HCT116 (cell line): ENCODE measurements at regions of chr6 and their contacts with region 1.

Region 1: DNA sequence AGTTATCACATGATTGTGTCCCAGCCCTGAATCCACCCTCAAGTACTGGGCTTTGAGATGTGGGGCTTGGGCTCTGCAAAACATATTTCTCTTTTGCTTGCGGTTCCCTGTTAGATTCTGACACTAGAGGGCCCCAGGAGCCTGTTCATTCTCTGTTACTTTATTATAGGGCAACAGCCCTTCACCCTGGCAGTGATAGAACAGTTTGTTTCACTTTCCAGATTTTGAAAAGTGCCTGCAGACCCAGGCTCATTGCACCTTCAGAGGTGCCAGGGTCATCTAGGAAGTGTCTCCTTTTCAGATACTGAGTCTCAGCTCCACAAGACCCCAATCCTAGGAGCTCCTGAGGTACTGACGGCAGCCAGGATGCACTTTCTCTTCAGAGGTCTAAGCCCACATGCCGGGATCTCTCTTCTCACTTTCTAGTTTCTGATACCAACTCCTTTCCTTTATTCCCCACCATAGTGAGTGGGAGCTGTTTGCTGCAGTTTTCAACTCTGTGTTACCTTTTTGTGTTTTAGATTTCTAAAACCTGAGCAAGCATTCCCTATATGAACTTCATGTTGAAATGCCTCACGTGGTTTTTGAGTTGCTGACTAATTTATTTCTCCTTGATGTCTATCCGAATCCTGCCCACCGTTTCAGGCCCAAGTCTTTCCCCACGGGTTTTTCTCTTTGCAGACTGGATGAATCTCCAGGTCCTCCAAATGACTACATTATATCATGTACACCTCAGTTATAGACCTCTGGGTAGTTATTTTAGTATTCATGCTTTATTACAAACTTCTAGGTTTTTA is 10.9 kb downstream of the ABT1 start:
- DNase-seq: peak; percentile 48
- ATAC-seq: peak; percentile 97
- H3K4me3 ChIP-seq: peak overlapping the region in 1 of 2 experiments; percentile 15; a peak in 1 of 4 replicates
- H3K27ac ChIP-seq: no peak overlapping the region
- H3K4me1 ChIP-seq: no peaks in the 10 kb centered on the region; a peak in 1 of 4 replicates
- H3K27me3 ChIP-seq: no peaks in the 10 kb centered on the region
- CTCF ChIP-seq: peak; percentile 79 to 80 (median 80)
- POLR2A ChIP-seq: no peak
- RAD21 ChIP-seq: peak; percentile 95

Region 2: DNA sequence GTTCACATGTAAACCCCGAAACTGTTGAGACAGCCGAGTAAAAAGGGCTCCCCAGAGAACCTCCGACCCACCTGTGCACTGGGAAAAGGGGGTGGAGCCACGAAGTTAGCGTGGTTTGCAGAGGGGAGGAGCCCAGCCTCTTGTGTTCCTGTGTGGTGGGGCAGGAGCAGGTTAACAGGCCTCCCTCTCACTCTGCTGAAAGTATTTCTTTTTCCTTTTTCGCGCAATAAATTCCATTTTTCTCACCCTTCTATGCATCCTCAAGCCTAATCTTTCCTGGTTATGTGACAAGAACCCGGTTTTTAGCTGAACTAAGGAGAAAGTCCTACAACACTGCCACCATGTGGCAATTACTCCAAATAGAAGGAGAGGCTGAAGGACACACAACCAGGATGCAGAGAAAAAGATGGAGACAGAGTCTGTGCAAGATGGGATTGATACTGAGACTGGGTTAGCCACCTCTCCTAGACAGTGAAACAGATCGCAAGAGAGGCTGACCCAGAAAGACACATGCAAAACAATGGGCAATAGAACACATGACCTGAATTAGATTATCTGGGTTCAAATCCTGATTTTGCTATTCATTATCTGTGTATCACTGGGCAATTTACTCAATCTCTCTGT is 471.2 kb after region 1 on chr6:
- CTCF ChIA-PET with region 1: no interaction called
- POLR2A ChIA-PET with region 1: no interaction called
- RAD21 ChIA-PET with region 1: no interaction called
- intact Hi-C with region 1: loop called (anchors 1 kb)
- DNase-seq: peak; percentile 52
- ATAC-seq: peak; percentile 99
- H3K4me3 ChIP-seq: peak overlapping the region; percentile 34 to 47
- H3K27ac ChIP-seq: no peak overlapping the region
- H3K4me1 ChIP-seq: peaks cover 0 to 10% of the 10 kb centered on the region in 2 experiments; a peak in 2 of 4 replicates
- H3K27me3 ChIP-seq: no peaks in the 10 kb centered on the region
- CTCF ChIP-seq: peak; percentile 72 to 90 (median 80)
- POLR2A ChIP-seq: no peak
- RAD21 ChIP-seq: peak; percentile 90